Activated CD8-positive, alpha-beta T cell treated with anti-CD3 and anti-CD28 coated beads, Interleukin-2, amount 10 ng/mL, durations not matched to agents 7 days and 5 days (primary cell): ENCODE measurements at regions of chr16 and their contacts with region 1.

Region 1: DNA sequence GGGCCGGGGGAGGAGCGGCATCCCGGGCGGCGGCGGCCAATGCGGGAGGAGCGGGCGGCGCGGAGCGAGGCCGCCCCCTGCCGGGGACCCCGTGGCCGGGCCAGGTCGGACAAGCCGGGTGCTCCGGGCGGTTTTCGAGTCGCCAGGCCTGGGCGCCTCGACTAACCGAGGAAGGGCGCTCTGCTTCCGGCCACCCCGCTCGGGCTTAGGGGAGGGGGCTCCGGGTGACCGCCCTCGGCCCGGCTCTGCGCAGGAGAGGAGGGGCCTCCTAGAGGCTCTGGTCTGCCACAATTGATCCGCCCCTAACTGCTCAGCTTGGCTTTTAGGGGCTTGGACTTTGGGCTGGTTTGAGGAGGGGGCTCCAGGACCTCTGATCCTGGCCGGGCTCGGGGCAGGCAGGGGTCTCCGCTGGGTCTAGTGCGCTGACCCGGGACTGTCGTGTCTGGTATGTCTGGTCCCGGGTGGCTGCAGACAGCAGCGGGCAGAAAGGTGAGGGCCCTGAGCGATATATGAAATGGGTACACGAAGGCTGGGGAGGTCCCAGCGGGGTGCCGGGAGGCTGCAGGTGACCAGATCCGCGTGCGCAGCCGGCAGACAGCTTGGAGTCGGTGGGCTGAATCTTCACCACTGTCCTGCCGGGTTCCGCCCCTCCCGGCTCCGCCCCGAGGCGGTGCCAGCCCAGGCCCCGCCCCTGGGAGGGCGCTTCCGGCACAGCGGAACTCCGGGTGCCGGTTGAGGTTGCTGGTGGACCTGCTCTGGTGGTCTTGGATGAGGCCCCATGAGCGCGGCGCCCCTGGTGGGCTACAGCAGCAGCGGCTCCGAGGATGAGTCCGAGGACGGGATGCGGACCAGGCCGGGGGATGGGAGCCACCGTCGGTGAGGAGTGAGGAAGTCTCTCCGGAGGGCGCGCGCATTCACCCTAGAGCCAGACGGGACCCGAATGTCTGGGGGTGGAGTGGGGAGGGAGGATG is at the start of gene USB1:
- DNase-seq: peak; percentile 85
- ATAC-seq: peak; percentile 75
- H3K4me3 Mint-ChIP-seq: peak within 1 kb of the TSS; percentile 96
- H3K27ac Mint-ChIP-seq: peak within 1 kb of the TSS; percentile 91
- H3K4me1 Mint-ChIP-seq: peaks cover 54% of the 10 kb centered on the region
- H3K27me3 Mint-ChIP-seq: no peaks in the 10 kb centered on the region
- total RNA-seq, gene USB1: 67.0 to 68.6 TPM

Region 2: DNA sequence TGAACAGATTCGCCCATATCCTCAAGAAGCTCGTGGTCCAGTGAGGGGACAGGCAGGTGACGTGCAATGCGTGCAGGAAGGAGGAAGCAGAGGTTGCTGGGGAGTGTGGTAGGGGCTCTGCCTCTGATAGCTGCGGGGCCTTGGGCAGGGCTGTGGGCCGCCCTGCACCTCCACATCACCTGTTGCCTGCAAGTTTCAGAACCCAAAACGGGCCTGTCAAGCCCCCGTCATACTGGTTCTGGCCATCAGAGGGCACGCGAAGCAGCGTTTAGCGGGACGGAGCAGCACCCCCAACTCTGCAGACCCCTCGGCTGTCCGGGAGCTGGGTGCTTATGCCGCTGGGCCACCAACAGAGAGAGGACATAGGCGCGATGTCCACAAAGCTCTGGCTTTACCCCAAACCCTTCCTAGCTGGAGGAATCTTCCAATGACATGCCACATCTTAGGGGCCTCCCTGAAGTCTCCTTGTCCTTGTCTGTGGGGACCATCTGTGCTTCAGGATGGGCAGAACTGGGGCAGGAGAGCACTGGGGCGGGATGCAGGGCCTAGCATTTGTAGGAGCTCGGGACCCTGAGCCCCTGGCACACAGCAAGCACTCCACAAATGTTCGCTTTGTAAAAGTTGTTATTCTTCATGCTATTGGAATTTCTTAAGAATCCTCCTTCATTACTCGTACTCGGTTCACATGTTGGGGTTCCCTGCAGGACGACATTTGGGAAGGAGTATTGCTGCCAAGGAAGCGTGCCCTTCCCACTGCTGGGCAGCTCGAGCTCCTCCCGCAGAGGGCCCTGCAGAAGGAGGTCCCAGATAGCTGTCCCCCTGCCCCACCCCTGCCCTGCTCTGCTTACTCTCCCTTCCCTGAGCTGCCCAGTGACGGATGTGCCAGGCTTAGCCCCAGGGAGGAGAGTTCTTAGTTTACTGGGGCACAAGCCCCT is 94.3 kb before region 1 on chr16:
- CTCF ChIA-PET with region 1: interaction called, 18 read pairs
- POLR2A ChIA-PET with region 1: interaction called, 3 read pairs
- DNase-seq: peak; percentile 47
- ATAC-seq: peak; percentile 60
- H3K4me3 Mint-ChIP-seq: no peak overlapping the region
- H3K27ac Mint-ChIP-seq: peak overlapping the region; percentile 16
- H3K4me1 Mint-ChIP-seq: peaks cover 6% of the 10 kb centered on the region
- H3K27me3 Mint-ChIP-seq: peaks cover 2% of the 10 kb centered on the region

Region 3: GRCh38 chr16:58047557-58048348 is 46.8 kb after region 1 on chr16:
- CTCF ChIA-PET with region 1: no interaction called
- POLR2A ChIA-PET with region 1: no interaction called
- DNase-seq: no peak
- ATAC-seq: no peak
- H3K4me3 Mint-ChIP-seq: no peak overlapping the region
- H3K27ac Mint-ChIP-seq: no peak overlapping the region
- H3K4me1 Mint-ChIP-seq: no peaks in the 10 kb centered on the region
- H3K27me3 Mint-ChIP-seq: no peaks in the 10 kb centered on the region